Kidney (tissue), 22 donors: ENCODE measurements at regions of chr3 and their contacts with region 1.

Region 1: DNA sequence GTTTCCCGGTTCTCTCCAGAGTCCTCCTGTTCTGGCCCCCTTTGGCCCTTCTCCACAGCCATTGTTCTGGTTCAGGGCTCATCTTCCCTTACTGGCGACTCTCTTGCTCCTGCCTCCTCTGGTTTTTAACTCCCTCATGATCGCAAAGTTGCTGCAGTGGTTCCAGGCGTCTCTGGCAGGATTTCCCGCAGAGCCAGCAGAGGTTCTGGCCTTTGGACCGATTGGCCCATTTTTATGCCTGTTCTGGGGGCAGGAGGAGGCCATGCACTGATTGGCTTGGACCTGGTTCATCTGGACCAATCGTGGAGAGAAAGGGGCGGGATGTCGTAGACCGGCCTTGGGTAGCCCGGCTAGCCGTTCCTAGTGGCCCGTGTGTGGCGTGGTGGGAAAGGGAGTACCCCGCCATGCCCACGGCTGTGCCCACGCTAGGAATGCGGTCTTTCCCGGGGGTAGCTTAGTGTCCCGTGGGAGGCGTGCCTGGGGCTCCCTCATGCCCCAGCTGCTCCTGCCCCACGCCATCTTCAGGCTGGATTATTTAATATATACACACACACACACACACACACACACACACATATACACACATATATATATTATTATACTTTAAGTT is 113.4 kb downstream of the FBLN2 start:
- DNase-seq: no peak
- H3K4me3 ChIP-seq: no peak overlapping the region
- H3K27ac ChIP-seq: no peak overlapping the region
- H3K4me1 ChIP-seq: no peaks in the 10 kb centered on the region
- H3K27me3 ChIP-seq: no peaks in the 10 kb centered on the region
- CTCF ChIP-seq: no peak

Region 2: GRCh38 chr3:13379201-13379830 is 283.0 kb before region 1 on chr3:
- intact Hi-C with region 1: no loop called
- DNase-seq: peak in 1 of 5 donors; percentile 13
- H3K4me3 ChIP-seq: no peak overlapping the region
- H3K27ac ChIP-seq: no peak overlapping the region
- H3K4me1 ChIP-seq: no peaks in the 10 kb centered on the region
- H3K27me3 ChIP-seq: no peaks in the 10 kb centered on the region
- CTCF ChIP-seq: no peak

Region 3: GRCh38 chr3:13884851-13885703 is 222.7 kb after region 1 on chr3:
- intact Hi-C with region 1: loop called (anchors 5 kb)
- DNase-seq: peak in 4 of 5 donors; percentile 66 to 75 (median 70)
- H3K4me3 ChIP-seq: no peak overlapping the region
- H3K27ac ChIP-seq: no peak overlapping the region
- H3K4me1 ChIP-seq: peaks cover 0 to 4% (median 0%) of the 10 kb centered on the region in 3 donors
- H3K27me3 ChIP-seq: peaks cover 14% of the 10 kb centered on the region
- CTCF ChIP-seq: peak; percentile 54